Sigmoid colon (tissue), 7 donors: ENCODE measurements at regions of chr1 and their contacts with region 1.

Region 1: DNA sequence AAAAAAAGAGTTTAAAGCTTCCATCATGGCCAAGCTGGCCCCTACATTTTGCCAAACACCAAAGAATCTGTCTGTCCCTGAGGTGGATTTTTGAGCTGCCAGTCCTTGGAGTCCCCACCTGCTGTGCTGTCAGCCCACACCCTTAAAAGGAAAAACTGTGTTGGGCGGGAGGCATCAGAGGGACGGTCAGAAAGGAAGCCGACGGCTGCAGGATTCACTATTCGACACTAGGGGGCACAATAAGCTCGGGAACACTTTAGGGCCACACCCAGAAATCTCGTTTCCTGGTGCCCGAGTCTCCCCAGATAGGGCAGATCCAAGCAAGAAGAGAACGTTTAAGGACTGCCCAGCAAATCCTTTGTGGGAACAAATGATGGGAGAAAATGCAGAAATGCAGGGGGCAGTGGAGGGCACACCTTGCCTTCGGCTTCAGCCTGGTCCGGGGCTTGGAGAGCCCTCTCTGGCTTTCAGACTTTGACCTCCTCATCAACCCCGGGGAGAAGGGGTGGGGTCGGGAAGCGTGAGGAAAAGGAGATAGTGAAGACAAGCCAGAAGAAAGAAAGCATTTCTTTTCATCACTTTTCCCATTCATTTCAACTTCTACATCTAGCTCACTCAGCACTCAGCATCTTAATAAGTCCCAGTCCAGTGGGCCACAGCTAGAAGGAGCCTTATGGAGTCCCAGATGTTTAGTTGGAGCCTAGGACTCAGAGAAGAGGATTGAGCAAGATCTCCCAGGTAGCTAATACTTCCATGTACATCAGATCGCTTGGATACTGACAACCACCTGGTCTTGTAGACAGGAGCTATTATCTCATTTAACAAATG is 5.0 kb upstream of the CTTNBP2NL start:
- DNase-seq: peak; percentile 96
- H3K4me3 ChIP-seq: peak overlapping the region; percentile 23 to 52 (median 46)
- H3K27ac ChIP-seq: peak overlapping the region; percentile 69 to 91 (median 84)
- H3K4me1 ChIP-seq: peaks cover 0 to 47% (median 36%) of the 10 kb centered on the region in 4 donors
- H3K27me3 ChIP-seq: no peaks in the 10 kb centered on the region
- CTCF ChIP-seq: peak; percentile 88 to 97 (median 92)
- EP300 ChIP-seq: no peak
- POLR2A ChIP-seq: no peak

Region 2: DNA sequence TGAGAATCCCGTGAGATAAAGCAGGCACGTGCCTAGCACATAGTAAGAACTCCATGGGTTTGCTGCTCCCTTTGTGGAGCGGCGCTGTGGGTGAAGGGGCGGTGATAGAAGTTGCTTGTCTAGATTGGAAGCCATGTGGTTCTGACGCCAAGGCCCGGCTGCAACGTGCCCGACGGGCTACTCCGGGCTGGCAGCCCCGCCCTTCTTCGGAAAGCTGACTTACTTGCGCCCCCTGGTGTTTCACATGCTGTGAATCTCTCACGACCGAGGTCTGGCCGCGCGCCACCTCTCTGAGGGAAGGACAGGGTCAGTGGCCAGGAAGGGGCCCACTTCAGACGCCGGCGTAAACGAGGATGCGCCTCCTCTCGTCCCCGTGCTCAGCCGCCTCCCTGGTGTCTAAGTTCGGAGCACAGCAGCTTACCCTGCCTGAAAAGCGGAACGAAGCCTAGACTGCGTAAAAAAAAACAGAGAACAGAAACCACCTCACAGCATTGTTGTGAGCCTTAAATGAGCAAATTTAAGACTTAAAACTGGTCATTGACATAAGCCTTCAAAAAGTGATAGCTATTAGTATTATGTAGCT is 75.2 kb after region 1 on chr1:
- intact Hi-C with region 1: loop called (anchors 1 kb)
- DNase-seq: peak; percentile 98
- H3K4me3 ChIP-seq: peak overlapping the region; percentile 19 to 43 (median 38)
- H3K27ac ChIP-seq: peak overlapping the region; percentile 73 to 81 (median 77)
- H3K4me1 ChIP-seq: peaks cover 0 to 17% (median 13%) of the 10 kb centered on the region in 4 donors
- H3K27me3 ChIP-seq: no peaks in the 10 kb centered on the region
- CTCF ChIP-seq: peak; percentile 76 to 95 (median 88)
- EP300 ChIP-seq: peak in 1 of 4 donors; percentile 2
- POLR2A ChIP-seq: no peak